IMR-90 (cell line): ENCODE measurements at regions of chr10 and their contacts with region 1.

Region 1: DNA sequence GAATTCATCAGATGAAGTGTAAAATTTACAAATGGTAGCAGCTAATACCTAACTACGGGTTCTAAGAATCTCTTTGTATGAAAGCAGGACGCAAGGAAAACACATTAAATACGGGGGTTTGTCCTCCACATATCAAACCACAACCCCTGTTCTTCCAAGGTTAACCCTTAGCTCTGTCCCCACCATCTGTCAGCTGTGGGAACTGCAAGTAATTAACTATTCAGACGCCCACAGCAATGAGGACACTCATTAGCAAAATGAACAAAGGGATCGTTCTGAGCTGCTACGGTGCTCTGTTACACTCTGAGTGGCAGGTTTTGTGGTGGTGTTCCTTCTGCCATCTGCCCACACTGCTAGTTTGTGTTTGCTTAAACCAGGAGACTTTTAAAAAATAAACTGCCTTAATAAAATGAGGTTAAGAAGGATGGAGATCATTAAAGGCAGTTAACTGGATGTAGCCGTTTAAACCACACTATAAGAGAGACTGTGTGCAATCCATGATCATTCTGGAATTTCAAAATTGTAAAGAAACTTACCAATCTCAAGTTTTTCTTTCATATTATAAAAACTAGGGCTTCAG is 51.4 kb downstream of the C10orf67 start:
- DNase-seq: peak; percentile 9
- ATAC-seq: peak; percentile 49
- H3K4me3 ChIP-seq: no peak overlapping the region
- H3K27ac ChIP-seq: no peak overlapping the region
- H3K4me1 ChIP-seq: no peaks in the 10 kb centered on the region
- H3K27me3 ChIP-seq: peaks cover 7% of the 10 kb centered on the region
- CTCF ChIP-seq: peak; percentile 43
- POLR2A ChIP-seq: no peak
- RAD21 ChIP-seq: peak; percentile 33

Region 2: GRCh38 chr10:23525406-23525805 is 232.2 kb after region 1 on chr10:
- CTCF ChIA-PET with region 1: no interaction called
- POLR2A ChIA-PET with region 1: no interaction called
- dilution Hi-C with region 1: no loop called
- in situ Hi-C with region 1: no loop called
- intact Hi-C with region 1: loop called (anchors 1 kb)
- DNase-seq: peak; percentile 7
- ATAC-seq: peak; percentile 71
- H3K4me3 ChIP-seq: no peak overlapping the region
- H3K27ac ChIP-seq: no peak overlapping the region
- H3K4me1 ChIP-seq: no peaks in the 10 kb centered on the region
- H3K27me3 ChIP-seq: no peaks in the 10 kb centered on the region
- CTCF ChIP-seq: peak; percentile 39
- POLR2A ChIP-seq: no peak
- RAD21 ChIP-seq: peak; percentile 51

Region 3: GRCh38 chr10:23702977-23703414 is 409.8 kb after region 1 on chr10:
- CTCF ChIA-PET with region 1: no interaction called
- POLR2A ChIA-PET with region 1: no interaction called
- dilution Hi-C with region 1: no loop called
- in situ Hi-C with region 1: no loop called
- intact Hi-C with region 1: loop called (anchors 1 kb)
- DNase-seq: peak; percentile 52
- ATAC-seq: peak; percentile 94
- H3K4me3 ChIP-seq: no peak overlapping the region
- H3K27ac ChIP-seq: no peak overlapping the region
- H3K4me1 ChIP-seq: no peaks in the 10 kb centered on the region
- H3K27me3 ChIP-seq: no peaks in the 10 kb centered on the region
- CTCF ChIP-seq: peak; percentile 54
- POLR2A ChIP-seq: no peak
- RAD21 ChIP-seq: peak; percentile 66

Region 4: DNA sequence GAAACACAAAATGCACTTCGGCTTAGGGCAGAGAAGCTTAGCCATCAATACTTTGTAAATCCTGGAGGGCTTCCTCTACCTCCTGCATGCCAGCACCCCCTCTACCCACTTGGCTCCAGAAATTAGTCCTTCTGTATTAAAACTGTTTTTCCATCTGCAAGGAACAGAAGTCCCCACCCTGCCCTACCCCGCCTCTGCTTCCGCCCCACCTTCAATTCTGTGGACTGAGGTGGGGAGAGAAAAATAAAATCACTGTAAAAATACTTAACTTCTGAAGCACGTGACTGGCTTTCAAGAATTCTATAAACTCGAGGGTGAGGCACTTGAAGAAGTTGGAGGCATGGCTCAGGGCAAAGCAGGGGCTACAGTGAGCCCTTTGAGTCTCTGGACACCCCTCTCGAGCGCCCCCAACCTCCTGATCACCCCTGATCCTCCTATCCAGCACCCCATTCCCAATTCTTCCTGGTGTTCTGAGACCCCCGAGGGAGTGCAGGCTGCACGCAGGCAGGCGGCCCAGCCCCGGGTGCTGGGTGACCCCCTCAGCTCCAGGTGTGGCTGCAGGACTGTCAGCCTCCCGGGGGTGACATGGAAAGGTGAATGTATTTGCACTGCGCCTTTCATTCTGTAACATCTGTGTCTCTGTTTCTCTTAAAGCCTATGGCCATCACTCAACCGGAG is 908.4 kb after region 1 on chr10:
- CTCF ChIA-PET with region 1: no interaction called
- POLR2A ChIA-PET with region 1: no interaction called
- dilution Hi-C with region 1: no loop called
- in situ Hi-C with region 1: no loop called
- intact Hi-C with region 1: loop called (anchors 1 kb)
- DNase-seq: no peak
- ATAC-seq: no peak
- H3K4me3 ChIP-seq: no peak overlapping the region
- H3K27ac ChIP-seq: no peak overlapping the region
- H3K4me1 ChIP-seq: no peaks in the 10 kb centered on the region
- H3K27me3 ChIP-seq: peaks cover 2% of the 10 kb centered on the region; the same call in 1 of the 2 replicates
- CTCF ChIP-seq: no peak
- POLR2A ChIP-seq: no peak
- RAD21 ChIP-seq: no peak